Activated naive CD4-positive, alpha-beta T cell treated with anti-CD3 and anti-CD28 coated beads for 36 hours (primary cell): ENCODE measurements at regions of chr11 and their contacts with region 1.

Region 1: GRCh38 chr11:76734456-76735420 is 48.4 kb upstream of the TSKU start:
- DNase-seq: no peak
- H3K4me3 Mint-ChIP-seq: no peak overlapping the region
- H3K27ac Mint-ChIP-seq: no peak overlapping the region
- H3K4me1 Mint-ChIP-seq: no peaks in the 10 kb centered on the region
- H3K27me3 Mint-ChIP-seq: no peaks in the 10 kb centered on the region

Region 2: DNA sequence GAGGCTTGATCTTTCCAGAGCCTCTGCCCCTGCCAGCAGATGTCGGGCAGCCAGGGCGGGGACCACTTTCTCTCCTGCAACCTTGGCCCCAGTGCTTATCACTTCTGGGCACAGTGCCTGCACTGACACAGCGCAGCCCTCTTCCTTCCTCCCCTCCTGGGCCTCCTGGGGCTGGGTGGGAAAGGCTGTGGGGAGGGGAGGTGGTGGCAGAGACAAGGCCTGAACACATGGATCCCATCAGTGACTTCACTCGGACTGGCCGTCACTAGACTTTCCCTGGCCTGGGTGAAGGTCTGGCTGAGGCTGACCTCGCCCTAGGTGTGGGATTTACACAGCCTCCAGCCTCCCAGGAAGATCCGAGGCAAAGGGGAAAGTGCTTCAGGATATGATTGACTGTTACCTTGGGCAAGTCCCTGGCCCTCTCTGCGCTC is 132.3 kb before region 1 on chr11:
- CTCF ChIA-PET with region 1: no interaction called
- intact Hi-C with region 1: no loop called
- DNase-seq: no peak
- H3K4me3 Mint-ChIP-seq: no peak overlapping the region
- H3K27ac Mint-ChIP-seq: no peak overlapping the region
- H3K4me1 Mint-ChIP-seq: no peaks in the 10 kb centered on the region
- H3K27me3 Mint-ChIP-seq: peaks cover 7% of the 10 kb centered on the region

Region 3: DNA sequence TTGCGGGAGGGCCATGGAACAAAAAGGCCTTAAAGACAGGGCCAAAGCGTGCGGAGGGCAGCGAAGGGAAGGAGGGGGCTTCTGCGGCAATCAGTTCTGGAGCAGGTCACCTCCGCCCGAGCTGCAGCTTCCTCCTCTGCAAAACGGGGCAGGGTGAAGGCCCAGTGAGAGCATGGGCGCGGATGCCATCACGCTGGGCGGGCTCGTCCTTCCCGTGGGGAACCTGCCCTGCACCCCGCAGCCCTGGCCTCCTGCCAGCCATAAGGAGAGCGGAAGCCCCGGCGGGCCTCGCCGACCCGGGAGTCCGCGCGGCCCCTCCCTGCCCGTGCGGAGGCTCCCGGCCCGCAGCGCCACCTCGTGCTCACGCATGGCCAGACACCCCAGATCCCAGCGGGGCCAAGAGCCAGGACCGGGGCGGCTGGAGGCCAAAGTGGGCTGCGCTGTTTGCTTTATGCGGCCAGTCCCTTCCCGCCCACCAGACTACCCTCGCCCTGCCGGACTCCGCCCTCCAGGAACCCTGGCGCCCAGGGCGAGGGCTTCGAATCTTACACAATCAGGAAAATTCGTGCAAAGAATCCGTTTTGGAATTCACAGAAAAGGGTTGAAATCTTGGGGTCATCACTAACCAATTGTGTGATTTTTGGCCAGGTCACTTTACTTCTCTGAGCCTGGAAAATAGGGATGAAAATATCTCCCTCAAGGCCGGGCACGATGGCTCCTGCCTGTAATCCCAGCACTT is 64.5 kb after region 1 on chr11:
- CTCF ChIA-PET with region 1: interaction called, 82 read pairs
- intact Hi-C with region 1: loop called (anchors 1 kb)
- DNase-seq: peak; percentile 79
- H3K4me3 Mint-ChIP-seq: peak overlapping the region; percentile 18
- H3K27ac Mint-ChIP-seq: no peak overlapping the region
- H3K4me1 Mint-ChIP-seq: peaks cover 14% of the 10 kb centered on the region
- H3K27me3 Mint-ChIP-seq: no peaks in the 10 kb centered on the region